Prostate gland (tissue), 2 donors: ENCODE measurements at regions of chr1 and their contacts with region 1.

Region 1: DNA sequence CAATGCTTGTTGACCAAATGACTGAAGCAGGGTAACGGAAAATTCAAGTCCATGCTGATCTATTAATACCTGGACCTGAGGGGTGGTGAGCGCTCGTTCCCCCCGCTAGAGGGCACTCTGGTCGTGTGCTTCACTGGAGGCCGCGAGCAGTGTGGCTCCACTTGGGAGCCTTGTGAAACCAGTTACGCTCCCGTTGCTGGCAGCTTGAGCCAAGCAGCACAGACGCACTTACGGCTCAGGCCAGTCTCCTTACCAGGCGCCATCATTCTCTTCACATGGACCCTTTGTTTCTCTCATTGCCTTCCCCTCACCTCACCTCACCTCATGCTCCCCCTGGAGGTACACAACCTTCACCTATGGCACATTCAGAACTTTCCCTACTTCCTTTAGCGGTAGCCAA is 49.7 kb upstream of the TSPAN2 start:
- DNase-seq: peak; percentile 87
- H3K4me3 ChIP-seq: no peak overlapping the region
- H3K27ac ChIP-seq: no peak overlapping the region
- H3K4me1 ChIP-seq: no peaks in the 10 kb centered on the region
- H3K27me3 ChIP-seq: no peaks in the 10 kb centered on the region
- CTCF ChIP-seq: peak; percentile 71 to 91 (median 84)
- POLR2A ChIP-seq: no peak

Region 2: GRCh38 chr1:115275212-115275611 is 136.2 kb after region 1 on chr1:
- intact Hi-C with region 1: no loop called
- DNase-seq: no peak
- H3K4me3 ChIP-seq: no peak overlapping the region
- H3K27ac ChIP-seq: no peak overlapping the region
- H3K4me1 ChIP-seq: no peaks in the 10 kb centered on the region
- H3K27me3 ChIP-seq: no peaks in the 10 kb centered on the region
- CTCF ChIP-seq: no peak
- POLR2A ChIP-seq: no peak

Region 3: GRCh38 chr1:115469703-115470476 is 330.9 kb after region 1 on chr1:
- intact Hi-C with region 1: loop called (anchors 1 kb)
- DNase-seq: no peak
- H3K4me3 ChIP-seq: no peak overlapping the region
- H3K27ac ChIP-seq: no peak overlapping the region
- H3K4me1 ChIP-seq: no peaks in the 10 kb centered on the region
- H3K27me3 ChIP-seq: no peaks in the 10 kb centered on the region
- CTCF ChIP-seq: peak; percentile 35 to 75 (median 72)
- POLR2A ChIP-seq: no peak

Region 4: DNA sequence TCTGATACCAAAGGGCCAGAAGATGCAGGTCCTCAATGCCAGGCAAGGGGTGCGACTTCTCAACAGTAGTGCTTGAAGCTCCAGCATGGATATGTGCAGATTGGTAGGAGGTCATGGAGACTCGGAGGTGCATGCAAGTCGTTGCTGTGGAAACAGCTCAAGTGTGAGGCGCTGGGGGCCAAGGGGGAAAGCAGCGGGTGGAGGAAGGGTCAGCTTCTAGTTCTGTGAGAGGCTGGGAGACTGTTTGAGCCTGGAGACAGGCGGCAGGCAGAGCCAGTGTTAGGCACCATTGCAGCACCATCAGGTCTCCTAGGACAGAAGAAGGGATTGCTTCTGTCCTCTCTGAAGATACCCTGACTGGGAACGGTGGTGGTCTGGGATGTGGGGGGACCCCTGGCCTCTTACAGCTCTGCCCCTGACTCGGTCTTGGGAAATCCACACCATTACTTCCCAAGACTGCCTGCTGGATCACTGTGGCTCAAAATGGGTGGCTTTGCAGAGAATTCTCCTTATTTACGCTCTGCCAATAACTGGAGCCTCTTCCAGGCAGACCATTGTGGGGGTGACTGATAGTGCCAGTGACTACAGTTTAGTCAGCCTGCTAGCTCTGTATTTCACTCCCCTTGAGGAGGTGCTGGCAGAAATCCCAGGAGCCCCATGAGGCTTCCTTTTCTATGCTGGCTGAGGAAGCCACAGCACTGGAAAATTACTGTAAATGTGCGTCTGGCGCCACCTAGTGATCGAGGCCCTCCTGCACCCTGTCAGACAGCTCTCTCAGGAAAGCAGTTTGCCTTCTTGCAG is 456.5 kb after region 1 on chr1:
- intact Hi-C with region 1: loop called (anchors 2 kb)
- DNase-seq: peak; percentile 72
- H3K4me3 ChIP-seq: no peak overlapping the region
- H3K27ac ChIP-seq: no peak overlapping the region
- H3K4me1 ChIP-seq: no peaks in the 10 kb centered on the region
- H3K27me3 ChIP-seq: no peaks in the 10 kb centered on the region
- CTCF ChIP-seq: peak; percentile 51 to 88 (median 82)
- POLR2A ChIP-seq: no peak